PC-3 (cell line): ENCODE measurements at regions of chr10 and their contacts with region 1.

Region 1: GRCh38 chr10:122019414-122019975 is 30.5 kb downstream of the TACC2 start:
- DNase-seq: peak; percentile 60
- ATAC-seq: peak; percentile 82
- H3K4me3 ChIP-seq: peak overlapping the region; percentile 67
- H3K27ac ChIP-seq: peak overlapping the region; percentile 79
- H3K4me1 ChIP-seq: peaks cover 26% of the 10 kb centered on the region
- H3K27me3 ChIP-seq: no peaks in the 10 kb centered on the region
- CTCF ChIP-seq: no peak

Region 2: GRCh38 chr10:121994390-121994961 is 25.0 kb before region 1 on chr10:
- CTCF ChIA-PET with region 1: no interaction called
- POLR2A ChIA-PET with region 1: no interaction called
- intact Hi-C with region 1: loop called (anchors 1 kb)
- DNase-seq: peak; percentile 76
- ATAC-seq: peak; percentile 73
- H3K4me3 ChIP-seq: peak overlapping the region; percentile 34; the same call in 1 of the 2 replicates
- H3K27ac ChIP-seq: peak overlapping the region; percentile 92
- H3K4me1 ChIP-seq: peaks cover 31% of the 10 kb centered on the region
- H3K27me3 ChIP-seq: no peaks in the 10 kb centered on the region
- CTCF ChIP-seq: no peak